B cell (primary cell): ENCODE measurements at regions of chr5 and their contacts with region 1.

Region 1: GRCh38 chr5:66595756-66596635 is at the start of gene MAST4:
- DNase-seq: peak; percentile 85
- ATAC-seq: peak; percentile 94
- H3K4me3 ChIP-seq: peak within 1 kb of the TSS; percentile 52 to 79 (median 59)
- H3K4me3 Mint-ChIP-seq: peak within 1 kb of the TSS; percentile 91
- H3K27ac ChIP-seq: no peak within 1 kb of the TSS
- H3K27ac Mint-ChIP-seq: peak within 1 kb of the TSS; percentile 2
- H3K4me1 ChIP-seq: peaks cover 14 to 16% of the 10 kb centered on the region in 2 donors
- H3K4me1 Mint-ChIP-seq: peaks cover 23% of the 10 kb centered on the region
- H3K27me3 ChIP-seq: peaks cover 0 to 48% (median 32%) of the 10 kb centered on the region in 4 experiments
- H3K27me3 Mint-ChIP-seq: peaks cover 45% of the 10 kb centered on the region
- CTCF ChIP-seq: no peak
- total RNA-seq, gene MAST4: 56.0 and 57.1 TPM in 2 replicates

Region 2: GRCh38 chr5:66477596-66477995 is 118.4 kb before region 1 on chr5:
- CTCF ChIA-PET with region 1: interaction called, 4 read pairs
- POLR2A ChIA-PET with region 1: no interaction called
- intact Hi-C with region 1: loop called (anchors 10 kb)
- DNase-seq: no peak
- ATAC-seq: no peak
- H3K4me3 ChIP-seq: no peak overlapping the region
- H3K4me3 Mint-ChIP-seq: no peak overlapping the region
- H3K27ac ChIP-seq: no peak overlapping the region
- H3K27ac Mint-ChIP-seq: no peak overlapping the region
- H3K4me1 ChIP-seq: peaks cover 0 to under 1% of the 10 kb centered on the region in 2 donors
- H3K4me1 Mint-ChIP-seq: peaks cover 2% of the 10 kb centered on the region
- H3K27me3 ChIP-seq: no peaks in the 10 kb centered on the region
- H3K27me3 Mint-ChIP-seq: no peaks in the 10 kb centered on the region
- CTCF ChIP-seq: no peak

Region 3: GRCh38 chr5:66553916-66554575 is 42.0 kb before region 1 on chr5:
- CTCF ChIA-PET with region 1: no interaction called
- POLR2A ChIA-PET with region 1: no interaction called
- intact Hi-C with region 1: loop called (anchors 2 kb)
- DNase-seq: peak; percentile 93
- ATAC-seq: peak; percentile 94
- H3K4me3 ChIP-seq: peak overlapping the region in 1 of 5 experiments; percentile 1
- H3K4me3 Mint-ChIP-seq: peak overlapping the region; percentile 65
- H3K27ac ChIP-seq: peak overlapping the region; percentile 69 to 75
- H3K27ac Mint-ChIP-seq: peak overlapping the region; percentile 93
- H3K4me1 ChIP-seq: peaks cover 28 to 34% of the 10 kb centered on the region in 2 donors
- H3K4me1 Mint-ChIP-seq: peaks cover 39% of the 10 kb centered on the region
- H3K27me3 ChIP-seq: peaks cover 0 to 2% (median 0%) of the 10 kb centered on the region in 4 experiments
- H3K27me3 Mint-ChIP-seq: no peaks in the 10 kb centered on the region
- CTCF ChIP-seq: no peak